ENCODE measurements at regions of chr3 and their contacts with region 1.

Region 1: GRCh38 chr3:184561061-184561912 is at the start of gene EPHB3:
- DNase-seq: peak; percentile 99
- ATAC-seq: peak; percentile 96 to 97
- total RNA-seq, gene EPHB3: 1.6 to 1.7 TPM

Region 2: DNA sequence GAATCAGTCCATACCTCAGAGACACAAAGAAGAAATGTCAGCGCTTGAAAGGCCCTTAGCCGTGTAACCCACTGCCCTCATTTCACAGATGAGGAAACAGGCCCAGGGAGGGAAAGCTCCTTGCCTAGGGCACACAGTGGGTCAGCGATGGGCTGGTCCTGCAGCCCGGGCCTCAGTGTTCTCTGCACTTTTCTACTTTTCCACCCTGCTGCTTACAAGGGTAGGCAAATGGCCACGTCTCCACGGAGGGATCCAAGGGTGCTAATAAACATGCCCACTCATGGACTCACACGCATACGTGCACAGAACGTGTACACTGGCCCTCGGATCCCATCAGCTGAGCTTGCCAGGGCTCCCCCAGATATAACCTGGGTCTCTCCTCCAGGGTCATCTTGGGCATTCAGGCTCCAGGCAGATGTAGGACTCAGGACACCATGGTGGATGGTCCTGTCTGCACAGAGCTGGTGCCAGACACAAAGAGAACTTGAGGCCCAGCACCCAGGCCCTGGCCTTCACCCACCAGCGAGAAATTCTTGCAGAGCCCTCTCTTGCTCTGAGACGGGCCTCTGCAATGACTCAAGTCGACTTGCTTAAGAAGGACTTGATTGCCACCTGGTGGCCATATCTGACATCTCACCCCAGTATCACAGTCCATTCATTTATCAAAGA is 216.2 kb after region 1 on chr3:
- intact Hi-C with region 1: loop called in 1 of 2 experiments (anchors 1 kb)
- DNase-seq: peak; percentile 92
- ATAC-seq: peak; percentile 90

Region 3: DNA sequence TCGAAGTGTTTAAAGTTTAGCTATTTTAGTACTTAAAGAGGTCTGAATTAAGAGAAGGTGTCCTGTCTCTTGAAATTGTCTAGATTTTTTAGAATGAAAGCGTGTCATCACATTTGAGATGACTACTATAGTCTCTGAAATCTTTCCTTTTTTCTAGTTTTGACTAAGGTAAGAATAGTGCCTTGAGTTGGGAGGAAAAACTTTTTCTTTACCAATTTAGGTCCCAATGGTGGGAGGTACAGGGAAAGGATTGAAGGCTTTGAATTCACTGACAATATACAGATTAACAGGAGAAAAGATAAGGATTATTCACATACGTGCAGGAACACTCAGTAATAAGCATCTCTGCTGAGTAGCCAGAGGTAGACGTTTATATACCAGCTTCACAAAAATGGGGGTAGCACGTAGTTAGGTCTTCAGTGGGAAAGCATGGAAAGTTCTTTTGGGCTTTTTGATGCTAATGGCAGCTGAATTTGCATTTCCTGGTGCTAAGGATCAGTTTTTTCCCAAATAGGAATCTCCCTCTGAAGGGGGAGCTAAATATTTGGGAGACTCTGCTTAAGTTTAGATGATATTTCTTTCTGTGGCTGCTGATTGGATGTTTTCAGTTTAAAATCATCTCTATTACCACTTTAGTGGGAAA is 338.8 kb after region 1 on chr3:
- intact Hi-C with region 1: no loop called
- DNase-seq: no peak
- ATAC-seq: no peak